ENCODE measurements at regions of chr7 and their contacts with region 1.

Region 1: GRCh38 chr7:80622541-80622940 is 15.9 kb upstream of the CD36 start:
- DNase-seq: no peak

Region 2: DNA sequence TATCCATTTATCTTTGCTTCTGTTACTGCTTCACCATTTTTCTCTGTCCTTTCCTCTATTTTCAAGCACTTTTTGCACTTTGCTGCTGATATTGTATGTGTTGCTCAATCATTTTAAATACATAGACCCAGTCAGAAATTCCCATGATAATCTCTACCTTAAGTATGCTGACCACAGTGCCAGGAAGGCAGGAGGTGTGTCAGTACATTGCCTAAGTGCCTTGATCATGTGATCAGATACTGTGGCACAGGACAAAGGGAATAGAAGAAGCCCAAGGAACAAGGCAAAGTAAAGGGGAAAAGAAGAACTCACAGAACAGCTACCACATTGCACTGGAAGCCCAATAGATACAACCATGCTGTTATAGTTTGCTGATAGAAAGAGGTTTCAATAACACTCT is 37.8 kb before region 1 on chr7:
- intact Hi-C with region 1: loop called in 1 of 2 experiments (anchors 2 kb)
- DNase-seq: no peak

Region 3: GRCh38 chr7:80841423-80842218 is 219.1 kb after region 1 on chr7:
- intact Hi-C with region 1: no loop called
- DNase-seq: no peak

Region 4: GRCh38 chr7:81053623-81054022 is 431.1 kb after region 1 on chr7:
- intact Hi-C with region 1: no loop called
- DNase-seq: no peak

Region 5: DNA sequence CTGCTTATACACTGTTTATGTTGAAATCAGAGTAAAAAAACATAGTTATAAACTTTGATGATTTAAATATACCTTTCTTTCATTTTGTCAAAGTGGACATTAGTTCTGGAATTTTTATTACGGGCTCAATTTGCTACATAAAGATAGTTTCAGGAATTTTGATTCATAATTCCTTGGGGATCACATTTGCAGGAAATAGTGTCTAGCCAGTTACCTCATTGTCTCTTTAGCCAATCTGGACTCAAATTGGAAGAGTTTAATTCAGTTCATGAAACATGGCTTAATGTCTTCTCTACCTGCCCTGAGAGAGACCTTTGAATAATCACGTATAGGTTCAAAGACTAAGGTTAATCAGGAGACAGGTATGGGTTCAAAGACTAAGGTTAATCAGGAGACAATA is 884.7 kb after region 1 on chr7:
- intact Hi-C with region 1: no loop called
- DNase-seq: no peak